CD4-positive, alpha-beta T cell (primary cell): ENCODE measurements at regions of chr13 and their contacts with region 1.

Region 1: DNA sequence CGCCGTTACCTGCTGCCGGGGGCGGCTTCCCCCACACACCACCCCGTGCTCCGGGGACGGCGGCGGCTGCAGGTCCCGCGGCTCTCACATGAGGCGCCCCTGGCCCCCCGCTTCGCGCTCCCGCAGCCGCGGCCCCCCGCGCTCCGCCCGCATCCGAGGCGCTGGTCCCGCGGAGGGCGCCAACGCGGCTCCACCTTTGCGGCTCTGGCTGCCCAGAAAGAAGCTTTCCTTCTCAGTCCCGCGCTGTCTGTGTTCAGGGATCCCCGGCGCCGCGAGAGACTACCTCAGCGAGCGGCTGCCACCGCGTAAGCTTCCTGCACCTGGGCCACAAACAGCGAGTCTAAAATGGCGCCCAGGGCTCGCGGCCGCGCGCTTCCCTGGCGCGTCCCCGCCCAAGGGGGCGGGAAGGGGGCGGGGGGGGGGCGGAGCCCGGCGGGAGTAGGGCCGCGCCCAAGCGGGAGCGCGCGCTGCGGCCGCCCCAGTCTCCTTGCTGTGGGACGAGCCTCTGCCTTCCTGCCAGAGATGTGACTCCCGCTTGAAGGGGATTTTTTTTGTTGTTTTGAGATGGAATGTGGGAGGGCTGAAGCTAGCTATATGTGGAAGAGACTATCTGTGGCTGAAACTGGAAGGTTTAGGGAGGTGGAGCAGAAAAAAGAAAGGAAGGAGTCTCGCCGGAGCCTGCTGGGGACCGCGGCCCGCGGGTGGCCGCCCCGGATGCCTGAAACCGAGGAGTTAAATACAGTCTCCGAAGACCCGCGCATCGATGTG is at the start of gene FBXL3:
- DNase-seq: peak; percentile 70 to 93 (median 81)
- ATAC-seq: peak; percentile 62
- H3K4me3 ChIP-seq: peak within 1 kb of the TSS; percentile 90
- H3K4me3 Mint-ChIP-seq: peak within 1 kb of the TSS; percentile 100
- H3K27ac ChIP-seq: peak within 1 kb of the TSS; percentile 89 to 98
- H3K27ac Mint-ChIP-seq: peak within 1 kb of the TSS; percentile 93
- H3K4me1 ChIP-seq: peaks cover 32% of the 10 kb centered on the region
- H3K4me1 Mint-ChIP-seq: peaks cover 61% of the 10 kb centered on the region
- H3K27me3 ChIP-seq: no peaks in the 10 kb centered on the region
- H3K27me3 Mint-ChIP-seq: no peaks in the 10 kb centered on the region
- CTCF ChIP-seq: no peak
- total RNA-seq, gene FBXL3: 88.7 to 90.4 TPM

Region 2: DNA sequence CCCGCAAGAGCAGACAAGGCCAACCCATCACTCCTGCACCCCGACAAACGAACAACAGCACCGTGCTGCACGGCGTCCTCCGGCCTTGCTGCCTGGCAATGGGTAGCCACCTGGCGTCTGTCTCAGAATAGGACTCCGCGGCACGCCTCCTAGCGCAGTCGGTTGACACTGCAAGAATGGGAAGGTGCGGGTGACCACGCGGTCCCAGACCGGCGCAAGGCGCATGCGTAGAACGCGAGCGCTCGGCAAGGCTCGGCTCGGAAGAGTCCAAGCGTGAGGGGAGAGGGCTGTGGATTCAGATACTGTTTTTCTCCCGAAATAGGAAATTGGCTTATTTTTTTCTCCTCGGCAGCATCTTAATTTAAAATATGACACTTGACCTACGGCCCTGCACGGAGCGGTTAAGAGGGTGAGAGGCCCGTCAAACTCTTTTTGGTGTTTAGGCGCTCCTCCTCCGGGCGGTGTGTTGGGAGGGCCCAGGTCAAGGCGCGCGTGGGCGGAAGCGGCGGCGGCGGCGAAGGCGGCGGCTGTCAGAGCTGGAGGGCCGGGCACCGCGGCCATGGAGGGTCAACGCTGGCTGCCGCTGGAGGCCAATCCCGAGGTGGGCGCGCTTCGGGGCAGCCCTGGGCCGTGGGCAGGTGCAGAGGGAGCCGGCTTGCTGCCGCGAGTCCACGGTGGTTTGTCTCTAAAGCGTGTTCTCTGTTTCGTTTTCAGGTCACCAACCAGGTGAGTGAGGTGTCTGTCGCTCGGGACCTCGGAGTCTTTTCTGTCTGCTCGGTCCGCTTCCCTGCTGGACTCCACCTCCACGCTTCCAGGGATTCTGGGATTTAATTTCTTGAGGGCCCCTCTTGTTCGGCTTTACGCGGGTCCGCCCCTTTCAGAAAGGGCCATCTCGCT is 1477.5 kb before region 1 on chr13 and contains the start of gene UCHL3:
- CTCF ChIA-PET with region 1: no interaction called
- POLR2A ChIA-PET with region 1: no interaction called
- intact Hi-C with region 1: loop called in 1 of 2 experiments (anchors 10 kb)
- DNase-seq: peak; percentile 95 to 99 (median 97)
- ATAC-seq: peak; percentile 93
- H3K4me3 ChIP-seq: peak within 1 kb of the TSS; percentile 93
- H3K4me3 Mint-ChIP-seq: peak within 1 kb of the TSS; percentile 97
- H3K27ac ChIP-seq: peak within 1 kb of the TSS; percentile 76 to 91
- H3K27ac Mint-ChIP-seq: peak within 1 kb of the TSS; percentile 89
- H3K4me1 ChIP-seq: peaks cover 18% of the 10 kb centered on the region
- H3K4me1 Mint-ChIP-seq: peaks cover 47% of the 10 kb centered on the region
- H3K27me3 ChIP-seq: no peaks in the 10 kb centered on the region
- H3K27me3 Mint-ChIP-seq: no peaks in the 10 kb centered on the region
- CTCF ChIP-seq: peak; percentile 96
- total RNA-seq, gene UCHL3: 16.0 to 17.7 TPM

Region 3: DNA sequence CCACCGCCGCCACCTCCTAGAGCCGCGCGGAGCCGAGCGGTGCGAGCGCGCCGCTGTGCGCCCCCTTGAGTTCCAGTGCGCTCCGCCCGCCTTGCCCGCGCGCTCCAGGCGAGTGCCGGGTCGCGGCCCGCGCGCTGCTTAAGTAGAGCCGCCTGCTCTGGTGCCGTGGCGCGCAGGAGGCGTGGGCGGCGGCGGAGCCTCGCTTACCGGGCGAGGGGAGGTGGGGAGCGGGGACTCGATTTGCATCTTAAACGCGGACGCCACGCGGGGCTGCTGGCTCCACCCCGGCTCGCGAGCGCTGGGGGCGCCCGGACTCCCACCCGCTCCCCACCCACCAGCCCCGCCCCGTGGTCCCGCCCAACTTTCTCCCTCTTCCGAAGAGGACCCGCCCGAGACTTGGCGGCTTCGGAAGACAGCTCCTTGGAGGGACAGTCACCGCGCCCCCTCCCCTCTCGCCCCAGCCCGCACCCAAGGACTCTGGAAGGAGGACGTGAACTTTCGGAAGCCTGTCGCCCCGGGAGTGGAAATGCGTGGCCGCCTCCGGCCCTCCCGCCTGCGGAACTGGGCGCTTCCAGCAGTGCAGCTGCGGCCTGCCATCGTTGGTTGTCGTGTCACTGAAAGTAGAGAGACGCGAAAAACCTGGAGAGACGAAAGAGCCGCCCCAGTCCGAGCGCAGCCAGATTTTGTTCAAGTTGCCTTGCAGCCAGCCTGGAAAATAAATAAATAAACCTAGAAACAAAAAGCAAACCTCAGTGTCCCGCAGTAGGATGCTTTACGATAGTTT is 140.5 kb before region 1 on chr13 and contains the start of gene KCTD12:
- CTCF ChIA-PET with region 1: interaction called, 3 read pairs
- POLR2A ChIA-PET with region 1: interaction called, 20 read pairs
- intact Hi-C with region 1: loop called in 1 of 2 experiments (anchors 5 kb)
- DNase-seq: peak; percentile 54 to 91 (median 72)
- ATAC-seq: peak; percentile 76
- H3K4me3 ChIP-seq: peak within 1 kb of the TSS; percentile 85
- H3K4me3 Mint-ChIP-seq: peak within 1 kb of the TSS; percentile 91
- H3K27ac ChIP-seq: peak within 1 kb of the TSS in 1 of 2 donors; percentile 24
- H3K27ac Mint-ChIP-seq: peak within 1 kb of the TSS; percentile 82
- H3K4me1 ChIP-seq: peaks cover 28% of the 10 kb centered on the region
- H3K4me1 Mint-ChIP-seq: peaks cover 38% of the 10 kb centered on the region
- H3K27me3 ChIP-seq: peaks cover 0 to 3% of the 10 kb centered on the region in 2 experiments
- H3K27me3 Mint-ChIP-seq: peaks cover 7% of the 10 kb centered on the region
- CTCF ChIP-seq: no peak
- total RNA-seq, gene KCTD12: 4.8 to 4.9 TPM

Region 4: GRCh38 chr13:76980075-76980718 is 46.8 kb before region 1 on chr13:
- CTCF ChIA-PET with region 1: interaction called, 12 read pairs
- POLR2A ChIA-PET with region 1: interaction called, 7 read pairs
- intact Hi-C with region 1: no loop called
- DNase-seq: peak; percentile 74 to 92 (median 84)
- ATAC-seq: peak; percentile 99
- H3K4me3 ChIP-seq: peak overlapping the region; percentile 16
- H3K4me3 Mint-ChIP-seq: peak overlapping the region; percentile 28
- H3K27ac ChIP-seq: no peak overlapping the region
- H3K27ac Mint-ChIP-seq: no peak overlapping the region
- H3K4me1 ChIP-seq: peaks cover 23% of the 10 kb centered on the region
- H3K4me1 Mint-ChIP-seq: peaks cover 12% of the 10 kb centered on the region
- H3K27me3 ChIP-seq: peaks cover 11 to 28% of the 10 kb centered on the region in 2 experiments
- H3K27me3 Mint-ChIP-seq: peaks cover 37% of the 10 kb centered on the region
- CTCF ChIP-seq: peak; percentile 99

Region 5: DNA sequence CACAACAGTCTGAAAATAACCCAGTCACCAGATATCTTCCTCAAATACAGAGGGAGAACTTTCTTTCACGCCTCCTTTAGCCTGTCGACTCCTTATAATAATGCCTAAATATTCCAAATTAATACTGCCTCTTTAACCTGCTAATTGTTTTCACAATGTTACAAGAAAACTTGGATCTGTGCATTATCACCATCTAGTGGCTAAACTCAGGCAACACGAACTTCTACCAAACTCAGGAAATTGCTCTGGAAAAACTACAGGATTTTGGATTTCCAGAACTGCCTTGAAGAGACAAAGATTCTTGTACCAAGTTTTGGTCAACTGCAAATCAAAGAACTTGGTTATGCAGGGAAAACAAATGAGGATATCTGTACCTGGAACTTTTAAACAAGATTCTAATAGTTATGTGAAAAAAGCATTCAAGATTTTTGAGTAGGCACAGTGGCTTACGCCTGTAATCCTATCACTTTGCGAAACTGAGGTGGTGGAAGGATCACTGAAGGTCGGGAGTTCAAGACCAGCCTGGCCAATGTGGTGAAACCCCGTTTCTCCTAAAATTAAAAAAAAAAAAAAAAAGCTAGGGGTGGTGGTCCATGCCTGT is 24.3 kb before region 1 on chr13:
- CTCF ChIA-PET with region 1: interaction called, 7 read pairs
- POLR2A ChIA-PET with region 1: interaction called, 23 read pairs
- intact Hi-C with region 1: loop called in 1 of 2 experiments (anchors 2 kb)
- DNase-seq: peak in 3 of 14 experiments; percentile 14 to 42 (median 39)
- ATAC-seq: no peak
- H3K4me3 ChIP-seq: no peak overlapping the region
- H3K4me3 Mint-ChIP-seq: no peak overlapping the region
- H3K27ac ChIP-seq: no peak overlapping the region
- H3K27ac Mint-ChIP-seq: peak overlapping the region; percentile 51
- H3K4me1 ChIP-seq: peaks cover 7% of the 10 kb centered on the region
- H3K4me1 Mint-ChIP-seq: peaks cover 73% of the 10 kb centered on the region
- H3K27me3 ChIP-seq: no peaks in the 10 kb centered on the region
- H3K27me3 Mint-ChIP-seq: no peaks in the 10 kb centered on the region
- CTCF ChIP-seq: peak; percentile 61

Region 6: GRCh38 chr13:77042566-77043178 is 15.7 kb after region 1 on chr13:
- CTCF ChIA-PET with region 1: no interaction called
- POLR2A ChIA-PET with region 1: interaction called, 27 read pairs
- intact Hi-C with region 1: no loop called
- DNase-seq: no peak
- ATAC-seq: no peak
- H3K4me3 ChIP-seq: no peak overlapping the region
- H3K4me3 Mint-ChIP-seq: no peak overlapping the region
- H3K27ac ChIP-seq: no peak overlapping the region
- H3K27ac Mint-ChIP-seq: peak overlapping the region; percentile 9
- H3K4me1 ChIP-seq: no peaks in the 10 kb centered on the region
- H3K4me1 Mint-ChIP-seq: no peaks in the 10 kb centered on the region
- H3K27me3 ChIP-seq: no peaks in the 10 kb centered on the region
- H3K27me3 Mint-ChIP-seq: no peaks in the 10 kb centered on the region
- CTCF ChIP-seq: no peak

Region 7: DNA sequence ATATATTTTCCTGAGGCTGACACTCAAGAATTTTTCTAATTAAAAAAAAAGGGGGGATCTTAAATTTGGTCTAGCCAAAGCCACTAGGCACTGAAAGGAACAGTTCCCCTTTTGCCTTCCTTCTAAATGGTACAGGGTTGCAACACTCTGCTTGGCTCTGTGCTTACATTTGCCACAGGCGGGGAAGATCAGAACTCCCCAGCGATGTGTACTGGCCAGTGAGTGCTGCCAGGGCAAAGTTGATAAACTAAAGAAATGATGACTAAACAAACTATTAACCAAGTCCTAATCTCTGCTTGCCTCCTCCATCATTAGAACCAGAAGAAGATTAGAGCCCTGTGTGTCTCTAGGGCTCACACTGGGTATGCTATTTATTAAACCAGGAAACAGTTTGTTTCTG is 433.2 kb after region 1 on chr13:
- CTCF ChIA-PET with region 1: no interaction called
- POLR2A ChIA-PET with region 1: no interaction called
- intact Hi-C with region 1: no loop called
- DNase-seq: peak in 3 of 14 experiments; percentile 15 to 56 (median 44)
- ATAC-seq: no peak
- H3K4me3 ChIP-seq: no peak overlapping the region
- H3K4me3 Mint-ChIP-seq: no peak overlapping the region
- H3K27ac ChIP-seq: no peak overlapping the region
- H3K27ac Mint-ChIP-seq: no peak overlapping the region
- H3K4me1 ChIP-seq: no peaks in the 10 kb centered on the region
- H3K4me1 Mint-ChIP-seq: no peaks in the 10 kb centered on the region
- H3K27me3 ChIP-seq: no peaks in the 10 kb centered on the region
- H3K27me3 Mint-ChIP-seq: no peaks in the 10 kb centered on the region
- CTCF ChIP-seq: no peak

Region 8: DNA sequence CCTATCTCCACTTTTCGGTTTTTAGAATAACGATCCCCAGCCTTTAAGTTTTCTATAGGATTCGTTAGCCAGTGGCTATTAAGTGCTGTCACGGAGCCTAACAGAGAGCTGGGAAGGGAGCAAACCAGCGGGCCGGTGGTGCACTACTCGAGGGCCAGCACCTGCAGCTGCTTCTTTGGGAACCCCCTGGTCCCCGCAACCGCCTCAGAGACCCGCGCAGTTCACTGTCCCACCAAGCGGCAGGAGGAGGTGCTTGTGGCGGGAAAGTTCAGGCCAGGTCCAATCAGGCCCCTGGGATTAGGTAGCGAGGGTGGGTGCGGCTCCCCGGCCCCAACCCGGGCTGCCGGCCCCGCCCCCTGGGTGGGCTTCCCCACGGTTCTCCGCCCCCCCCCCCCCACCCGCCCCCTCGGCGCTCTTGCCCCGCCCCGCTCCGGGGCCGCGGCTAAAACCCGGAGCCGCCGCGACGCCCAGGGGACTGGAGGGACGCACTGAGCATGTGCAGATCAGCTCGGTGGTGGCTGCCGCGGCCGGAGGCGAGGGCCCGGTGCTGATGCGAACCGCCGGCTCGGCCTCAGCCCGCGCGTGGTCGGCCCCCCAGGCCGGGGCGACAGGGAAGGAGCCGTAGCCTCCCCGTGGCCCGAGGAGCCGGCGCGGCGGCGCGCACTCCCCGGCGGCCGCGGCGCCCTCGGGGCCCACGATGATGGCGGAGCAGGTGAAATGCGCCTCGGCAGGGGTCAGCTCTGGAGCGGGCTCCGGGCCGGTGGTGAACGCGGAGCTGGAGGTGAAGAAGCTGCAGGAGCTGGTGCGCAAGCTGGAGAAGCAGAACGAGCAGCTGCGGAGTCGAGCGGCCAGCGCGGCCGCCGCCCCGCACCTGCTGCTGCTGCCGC is 670.5 kb after region 1 on chr13 and contains the start of gene SLAIN1:
- CTCF ChIA-PET with region 1: no interaction called
- POLR2A ChIA-PET with region 1: interaction called, 11 read pairs
- intact Hi-C with region 1: loop called (anchors 5 kb)
- DNase-seq: peak; percentile 69 to 93 (median 82)
- ATAC-seq: peak; percentile 75
- H3K4me3 ChIP-seq: peak within 1 kb of the TSS; percentile 78
- H3K4me3 Mint-ChIP-seq: peak within 1 kb of the TSS; percentile 100
- H3K27ac ChIP-seq: peak within 1 kb of the TSS; percentile 71 to 72
- H3K27ac Mint-ChIP-seq: peak within 1 kb of the TSS; percentile 82
- H3K4me1 ChIP-seq: peaks cover 15% of the 10 kb centered on the region
- H3K4me1 Mint-ChIP-seq: peaks cover 50% of the 10 kb centered on the region
- H3K27me3 ChIP-seq: no peaks in the 10 kb centered on the region
- H3K27me3 Mint-ChIP-seq: no peaks in the 10 kb centered on the region
- CTCF ChIP-seq: no peak
- total RNA-seq, gene SLAIN1: 41.2 to 42.5 TPM